ENCODE measurements at regions of chr9 and their contacts with region 1.

Region 1: GRCh38 chr9:21357479-21358460 is 7.1 kb upstream of the IFNA6 start:
- DNase-seq: no peak
- H3K4me3 Mint-ChIP-seq: peak overlapping the region; percentile 56
- H3K27ac Mint-ChIP-seq: peak overlapping the region; percentile 68
- H3K4me1 Mint-ChIP-seq: peaks cover 14% of the 10 kb centered on the region
- H3K27me3 Mint-ChIP-seq: peaks cover 57% of the 10 kb centered on the region

Region 2: GRCh38 chr9:21381448-21382339 is 23.9 kb after region 1 on chr9:
- intact Hi-C with region 1: loop called (anchors 1 kb)
- DNase-seq: peak; percentile 6
- H3K4me3 Mint-ChIP-seq: peak overlapping the region; percentile 3
- H3K27ac Mint-ChIP-seq: no peak overlapping the region
- H3K4me1 Mint-ChIP-seq: peaks cover 18% of the 10 kb centered on the region
- H3K27me3 Mint-ChIP-seq: peaks cover 43% of the 10 kb centered on the region

Region 3: DNA sequence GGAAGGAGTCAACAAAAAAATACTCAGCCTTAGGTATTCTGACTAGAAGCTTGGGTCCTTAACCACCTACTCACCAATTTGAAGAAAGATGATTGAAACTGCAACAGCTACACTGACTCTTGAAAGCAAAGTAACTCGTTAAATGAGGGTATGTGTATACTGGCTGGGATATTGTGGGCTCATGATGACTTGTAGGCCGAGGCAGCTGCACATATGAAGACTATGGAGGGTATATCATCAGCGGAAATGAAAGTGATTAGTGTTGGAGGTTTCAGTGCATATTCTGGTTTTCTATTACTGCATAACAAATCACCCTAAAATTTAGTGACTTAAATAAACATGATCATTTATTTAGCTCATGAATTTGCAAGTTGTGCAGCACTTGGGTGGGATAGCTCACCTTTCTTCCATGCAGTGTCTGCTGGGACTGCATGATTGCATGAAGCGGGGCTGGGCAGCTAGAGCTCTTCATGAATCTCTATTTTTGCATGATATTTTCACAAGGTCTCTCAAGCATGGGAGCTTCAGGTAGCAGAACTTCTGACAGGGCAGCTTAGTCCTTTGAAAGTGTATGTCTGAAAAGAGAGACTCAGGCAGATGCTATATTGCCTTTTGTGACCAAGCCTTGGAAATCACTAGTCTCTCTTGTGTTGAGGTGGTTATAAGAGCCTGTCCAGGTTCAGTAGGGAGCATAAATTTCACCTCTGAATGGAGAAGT is 747.4 kb after region 1 on chr9:
- intact Hi-C with region 1: loop called (anchors 1 kb)
- DNase-seq: no peak
- H3K4me3 Mint-ChIP-seq: no peak overlapping the region
- H3K27ac Mint-ChIP-seq: no peak overlapping the region
- H3K4me1 Mint-ChIP-seq: peaks cover 47% of the 10 kb centered on the region
- H3K27me3 Mint-ChIP-seq: peaks cover 27% of the 10 kb centered on the region